ENCODE measurements at regions of chr5 and their contacts with region 1.

Region 1: GRCh38 chr5:134845852-134846640 is at the start of gene C5orf24:
- DNase-seq: peak; percentile 92 to 99 (median 95)

Region 2: GRCh38 chr5:134648425-134649162 is 197.5 kb before region 1 on chr5 and contains the start of gene SEC24A:
- intact Hi-C with region 1: no loop called
- DNase-seq: peak; percentile 69 to 97 (median 82)

Region 3: GRCh38 chr5:134758504-134759341 is 87.3 kb before region 1 on chr5 and contains the start of gene DDX46:
- intact Hi-C with region 1: loop called (anchors 5 kb)
- DNase-seq: peak; percentile 85 to 99 (median 92)

Region 4: GRCh38 chr5:134873987-134874830 is 28.2 kb after region 1 on chr5 and contains the start of gene TXNDC15:
- intact Hi-C with region 1: loop called (anchors 1 kb)
- DNase-seq: peak; percentile 78 to 98 (median 82)

Region 5: DNA sequence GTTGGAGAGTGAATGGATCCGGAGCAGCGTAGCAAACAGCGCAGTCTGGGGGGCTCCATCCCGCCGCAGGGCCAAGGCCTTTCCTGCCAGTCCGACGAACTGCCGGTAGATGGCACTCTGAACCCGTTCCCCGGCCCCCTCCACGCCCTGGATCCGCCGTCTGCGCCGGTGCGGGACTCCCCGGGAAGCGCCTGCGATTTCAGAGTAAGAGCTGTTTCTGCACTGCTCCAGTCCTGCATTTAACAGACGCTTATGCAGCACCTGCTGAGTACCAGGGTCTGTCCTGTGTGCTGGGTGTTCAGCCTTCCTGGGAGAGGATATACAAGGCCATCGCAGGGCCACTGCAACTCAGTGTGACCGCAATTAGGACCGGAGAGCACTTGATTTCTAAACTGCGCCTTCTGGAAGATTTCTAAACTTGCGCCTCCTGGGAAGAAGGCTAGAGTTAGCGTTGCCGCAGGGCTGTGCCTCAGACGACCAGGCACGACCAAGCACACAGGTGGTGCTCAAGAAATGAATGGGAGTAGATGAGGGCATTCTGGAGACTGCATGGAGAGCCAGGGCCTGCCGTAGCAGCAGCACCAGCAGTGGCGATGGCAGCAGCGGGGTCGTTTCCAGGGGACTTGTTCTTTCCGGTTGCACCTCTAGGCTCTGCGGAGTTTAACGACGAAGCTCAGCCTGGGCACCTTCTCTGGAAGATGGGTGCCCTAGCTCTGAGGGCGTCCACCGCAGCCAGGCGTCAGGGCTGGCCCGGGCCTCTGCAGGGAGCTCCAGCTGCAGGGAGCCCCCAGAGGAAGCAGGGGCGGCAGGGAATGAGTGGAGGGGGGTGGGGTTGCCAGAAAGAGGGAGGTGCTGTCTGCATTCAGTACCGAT is 620.4 kb after region 1 on chr5:
- intact Hi-C with region 1: no loop called
- DNase-seq: peak; percentile 76 to 97 (median 84)

Region 6: GRCh38 chr5:136037001-136037705 is 1191.1 kb after region 1 on chr5:
- intact Hi-C with region 1: no loop called
- DNase-seq: no peak